ENCODE measurements at regions of chr11 and their contacts with region 1.

Region 1: GRCh38 chr11:10933455-10934292 is 75.8 kb upstream of the ZBED5 start:
- DNase-seq: peak; percentile 66 to 87 (median 82)
- ATAC-seq: peak; percentile 88
- H3K4me3 ChIP-seq: peak overlapping the region; percentile 50 to 53
- H3K4me3 Mint-ChIP-seq: peak overlapping the region; percentile 83
- H3K27ac ChIP-seq: no peak overlapping the region
- H3K27ac Mint-ChIP-seq: no peak overlapping the region
- H3K4me1 ChIP-seq: no peaks in the 10 kb centered on the region
- H3K4me1 Mint-ChIP-seq: peaks cover 20% of the 10 kb centered on the region
- H3K27me3 ChIP-seq: peaks cover 7 to 19% of the 10 kb centered on the region in 2 experiments
- H3K27me3 Mint-ChIP-seq: peaks cover 18% of the 10 kb centered on the region
- CTCF ChIP-seq: peak; percentile 98

Region 2: GRCh38 chr11:10792398-10792975 is 141.2 kb before region 1 on chr11:
- CTCF ChIA-PET with region 1: interaction called, 16 read pairs
- POLR2A ChIA-PET with region 1: interaction called, 3 read pairs
- intact Hi-C with region 1: loop called (anchors 1 to 2 kb)
- DNase-seq: peak; percentile 65 to 91 (median 85)
- ATAC-seq: peak; percentile 88
- H3K4me3 ChIP-seq: no peak overlapping the region
- H3K4me3 Mint-ChIP-seq: no peak overlapping the region
- H3K27ac ChIP-seq: no peak overlapping the region
- H3K27ac Mint-ChIP-seq: no peak overlapping the region
- H3K4me1 ChIP-seq: peaks cover 24% of the 10 kb centered on the region
- H3K4me1 Mint-ChIP-seq: peaks cover 31% of the 10 kb centered on the region
- H3K27me3 ChIP-seq: peaks cover 0 to 5% of the 10 kb centered on the region in 2 experiments
- H3K27me3 Mint-ChIP-seq: peaks cover 3% of the 10 kb centered on the region
- CTCF ChIP-seq: peak; percentile 90

Region 3: DNA sequence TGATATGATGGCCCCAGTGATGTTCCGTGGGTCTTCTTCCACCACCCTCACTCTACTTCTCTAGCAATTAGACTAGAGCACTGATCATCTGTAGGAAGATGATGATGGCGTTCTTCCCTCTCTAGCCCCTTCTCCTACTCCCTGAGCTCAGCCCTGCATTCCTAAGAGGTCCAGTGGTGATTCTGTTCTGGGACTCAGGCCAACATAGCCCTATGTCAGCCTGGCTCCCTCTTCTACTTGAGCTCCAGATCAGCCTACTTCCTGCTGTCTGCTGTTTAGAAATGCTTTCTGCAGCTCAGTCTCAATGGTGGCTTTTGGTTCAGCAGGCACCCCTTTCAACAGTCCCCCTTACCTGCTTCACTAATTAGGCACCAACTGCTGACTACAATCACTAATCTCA is 10.3 kb after region 1 on chr11:
- CTCF ChIA-PET with region 1: interaction called, 18 read pairs
- POLR2A ChIA-PET with region 1: interaction called, 3 read pairs
- intact Hi-C with region 1: no loop called
- DNase-seq: no peak
- ATAC-seq: no peak
- H3K4me3 ChIP-seq: no peak overlapping the region
- H3K4me3 Mint-ChIP-seq: no peak overlapping the region
- H3K27ac ChIP-seq: no peak overlapping the region
- H3K27ac Mint-ChIP-seq: no peak overlapping the region
- H3K4me1 ChIP-seq: no peaks in the 10 kb centered on the region
- H3K4me1 Mint-ChIP-seq: no peaks in the 10 kb centered on the region
- H3K27me3 ChIP-seq: no peaks in the 10 kb centered on the region
- H3K27me3 Mint-ChIP-seq: peaks cover 8% of the 10 kb centered on the region
- CTCF ChIP-seq: no peak

Region 4: DNA sequence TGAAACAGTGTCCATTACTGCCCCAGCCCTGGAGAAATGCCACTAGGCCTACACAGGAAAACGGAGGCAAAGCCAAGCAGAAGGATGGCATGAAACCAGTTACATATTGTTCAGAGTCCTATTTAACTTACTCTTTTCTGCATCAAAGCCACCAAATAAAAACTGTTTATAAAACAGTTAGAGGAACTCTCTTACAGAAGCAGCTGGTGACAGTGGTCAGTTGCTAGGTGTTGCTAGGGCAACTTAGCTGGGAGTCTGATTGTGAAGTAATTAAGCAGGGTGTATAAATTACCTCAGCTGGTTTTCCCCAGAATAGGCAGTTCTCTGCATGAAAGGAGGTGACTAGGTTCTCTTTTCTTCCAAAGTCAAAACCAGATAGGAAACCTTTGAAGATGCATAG is 39.7 kb after region 1 on chr11:
- CTCF ChIA-PET with region 1: no interaction called
- POLR2A ChIA-PET with region 1: no interaction called
- intact Hi-C with region 1: no loop called
- DNase-seq: no peak
- ATAC-seq: no peak
- H3K4me3 ChIP-seq: no peak overlapping the region
- H3K4me3 Mint-ChIP-seq: no peak overlapping the region
- H3K27ac ChIP-seq: no peak overlapping the region
- H3K27ac Mint-ChIP-seq: no peak overlapping the region
- H3K4me1 ChIP-seq: no peaks in the 10 kb centered on the region
- H3K4me1 Mint-ChIP-seq: no peaks in the 10 kb centered on the region
- H3K27me3 ChIP-seq: no peaks in the 10 kb centered on the region
- H3K27me3 Mint-ChIP-seq: peaks cover 6% of the 10 kb centered on the region
- CTCF ChIP-seq: no peak

Region 5: GRCh38 chr11:11157185-11157584 is 223.5 kb after region 1 on chr11:
- CTCF ChIA-PET with region 1: interaction called, 15 read pairs
- POLR2A ChIA-PET with region 1: no interaction called
- intact Hi-C with region 1: loop called (anchors 1 to 2 kb)
- DNase-seq: peak; percentile 37 to 78 (median 70)
- ATAC-seq: peak; percentile 74
- H3K4me3 ChIP-seq: no peak overlapping the region
- H3K4me3 Mint-ChIP-seq: no peak overlapping the region
- H3K27ac ChIP-seq: no peak overlapping the region
- H3K27ac Mint-ChIP-seq: peak overlapping the region; percentile 94
- H3K4me1 ChIP-seq: peaks cover 23% of the 10 kb centered on the region
- H3K4me1 Mint-ChIP-seq: peaks cover 22% of the 10 kb centered on the region
- H3K27me3 ChIP-seq: no peaks in the 10 kb centered on the region
- H3K27me3 Mint-ChIP-seq: no peaks in the 10 kb centered on the region
- CTCF ChIP-seq: peak; percentile 61

Region 6: DNA sequence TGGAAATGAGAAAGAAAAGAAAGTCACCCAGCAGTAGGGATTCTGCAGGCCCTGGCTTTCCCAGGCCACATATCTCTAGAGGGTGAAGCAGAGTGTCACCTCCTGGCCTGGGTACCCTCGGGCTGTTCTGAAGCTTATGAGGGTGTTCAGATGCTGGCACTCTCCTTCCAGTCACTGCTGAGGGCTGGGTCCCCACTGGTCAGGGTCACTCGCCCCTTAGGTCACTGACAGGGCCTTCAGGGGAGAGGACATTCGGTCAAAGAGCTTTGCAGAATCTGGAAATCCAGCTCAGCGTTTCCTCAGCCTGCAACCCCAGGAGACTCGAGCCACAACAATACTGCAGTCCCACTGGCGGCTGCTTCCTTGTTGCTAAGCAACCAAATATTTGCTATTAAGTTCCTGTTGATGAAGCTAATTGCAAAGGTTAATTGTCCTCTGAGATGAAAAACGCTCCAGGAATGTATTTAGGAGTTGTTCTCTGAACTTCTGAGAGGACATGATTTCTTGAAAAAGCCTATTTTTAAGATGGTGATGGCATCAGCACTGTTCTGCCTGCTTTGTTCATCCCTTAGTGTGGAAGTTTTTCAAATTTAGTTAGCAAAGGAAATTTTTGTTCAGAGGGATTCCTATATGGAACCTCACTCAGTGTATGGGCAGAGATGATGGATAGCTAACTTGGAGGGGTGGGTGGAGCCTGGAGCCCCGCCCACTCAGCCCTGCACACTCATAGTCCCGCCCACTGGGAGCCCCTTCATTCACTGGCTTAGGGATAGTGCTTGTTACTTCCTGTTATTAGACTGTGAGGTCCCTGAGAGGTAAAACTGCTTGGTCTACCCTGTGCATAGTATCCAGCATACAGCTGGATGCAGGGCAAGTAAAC is 310.2 kb after region 1 on chr11:
- CTCF ChIA-PET with region 1: no interaction called
- POLR2A ChIA-PET with region 1: no interaction called
- intact Hi-C with region 1: no loop called
- DNase-seq: peak in 5 of 9 experiments; percentile 8 to 59 (median 32)
- ATAC-seq: peak; percentile 73
- H3K4me3 ChIP-seq: no peak overlapping the region
- H3K4me3 Mint-ChIP-seq: no peak overlapping the region
- H3K27ac ChIP-seq: no peak overlapping the region
- H3K27ac Mint-ChIP-seq: no peak overlapping the region
- H3K4me1 ChIP-seq: peaks cover 11% of the 10 kb centered on the region
- H3K4me1 Mint-ChIP-seq: peaks cover 16% of the 10 kb centered on the region
- H3K27me3 ChIP-seq: no peaks in the 10 kb centered on the region
- H3K27me3 Mint-ChIP-seq: peaks cover 3% of the 10 kb centered on the region
- CTCF ChIP-seq: no peak

Region 7: DNA sequence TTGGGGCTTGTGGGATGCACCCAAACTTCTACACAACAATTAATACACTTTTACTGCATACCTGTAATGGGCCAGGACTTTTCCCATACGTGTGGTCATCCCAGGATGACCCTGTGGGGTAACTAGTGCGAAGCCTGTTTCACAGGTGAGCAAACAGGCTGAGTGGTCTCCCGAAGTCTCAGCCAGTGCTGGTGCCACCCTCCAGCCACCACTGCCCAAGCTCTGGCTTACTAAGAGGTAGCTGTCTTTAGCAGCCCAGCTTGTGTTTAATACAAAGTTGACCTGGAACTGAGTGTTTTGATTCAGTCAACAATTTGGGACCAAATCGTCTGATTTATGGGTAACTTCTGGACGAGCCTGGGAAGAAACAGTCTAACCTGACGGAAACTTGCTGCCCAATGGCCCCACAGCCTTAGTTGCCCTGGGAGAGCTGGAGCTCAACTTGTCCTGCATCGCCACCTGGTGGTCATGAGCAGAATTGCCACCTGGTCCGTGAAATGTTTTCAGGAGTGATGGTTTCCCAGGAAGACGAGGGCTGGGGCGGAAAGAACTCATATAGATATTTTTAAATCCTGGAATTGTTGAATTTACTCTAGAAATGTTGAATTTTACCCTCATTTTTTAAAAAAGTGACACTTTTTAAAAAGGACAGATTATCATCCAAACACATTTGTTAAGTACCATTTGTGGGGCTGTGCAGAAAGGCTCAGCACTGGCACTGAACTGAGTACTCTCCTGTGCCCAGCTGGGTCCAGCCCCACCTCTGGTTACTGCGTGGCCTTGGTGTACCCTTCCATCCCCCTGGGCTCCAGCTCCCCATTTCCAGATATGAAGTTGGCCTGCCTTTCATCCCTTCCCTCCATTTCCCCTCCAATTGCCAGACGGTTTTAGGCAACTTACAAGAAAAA is 1348.2 kb after region 1 on chr11:
- CTCF ChIA-PET with region 1: no interaction called
- POLR2A ChIA-PET with region 1: no interaction called
- intact Hi-C with region 1: loop called in 1 of 2 experiments (anchors 5 kb)
- DNase-seq: peak; percentile 53 to 87 (median 81)
- ATAC-seq: peak; percentile 64
- H3K4me3 ChIP-seq: no peak overlapping the region
- H3K4me3 Mint-ChIP-seq: no peak overlapping the region
- H3K27ac ChIP-seq: no peak overlapping the region
- H3K27ac Mint-ChIP-seq: no peak overlapping the region
- H3K4me1 ChIP-seq: no peaks in the 10 kb centered on the region
- H3K4me1 Mint-ChIP-seq: no peaks in the 10 kb centered on the region
- H3K27me3 ChIP-seq: no peaks in the 10 kb centered on the region
- H3K27me3 Mint-ChIP-seq: no peaks in the 10 kb centered on the region
- CTCF ChIP-seq: peak; percentile 92

Measured in CD8-positive, alpha-beta T cell (primary cell).